Activated CD8-positive, alpha-beta T cell treated with anti-CD3 and anti-CD28 coated beads for 36 hours (primary cell): ENCODE measurements at regions of chr9 and their contacts with region 1.

Region 1: DNA sequence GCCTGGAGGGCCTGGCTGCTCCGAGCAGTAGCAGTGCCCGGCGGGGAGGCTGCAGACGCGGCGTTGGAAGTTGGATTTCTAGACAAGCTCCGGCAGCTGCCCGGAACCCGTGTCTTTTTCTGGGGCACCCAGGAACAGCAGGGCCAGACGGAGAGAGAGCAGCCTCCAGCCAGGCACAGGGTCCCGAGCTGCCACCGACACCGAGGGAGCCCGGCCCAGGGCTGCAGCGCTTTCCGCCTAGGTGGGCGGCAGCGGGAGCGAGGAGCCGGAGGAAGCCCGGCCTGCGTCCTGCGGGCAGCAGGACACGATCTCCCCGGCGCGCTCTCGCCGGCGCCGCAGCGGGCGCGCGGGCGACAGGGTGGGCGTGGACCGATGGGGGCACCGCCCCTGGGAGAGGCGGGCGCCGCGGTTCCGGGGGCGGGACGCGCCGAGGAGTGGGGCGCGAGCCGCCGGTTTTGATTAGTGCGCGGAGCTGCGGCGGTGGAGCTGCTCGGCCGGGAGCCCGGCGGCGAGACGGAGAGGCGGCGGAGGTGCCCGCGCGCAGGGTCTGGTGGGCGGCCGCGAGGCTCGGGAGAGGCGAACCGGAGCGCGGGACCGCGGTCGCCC is at the start of gene UGCG:
- DNase-seq: peak; percentile 88
- ATAC-seq: peak; percentile 88
- H3K4me3 Mint-ChIP-seq: peak within 1 kb of the TSS; percentile 87
- H3K27ac Mint-ChIP-seq: peak within 1 kb of the TSS; percentile 90
- H3K4me1 Mint-ChIP-seq: peaks cover 13% of the 10 kb centered on the region
- H3K27me3 Mint-ChIP-seq: no peaks in the 10 kb centered on the region
- CTCF ChIP-seq: no peak
- total RNA-seq, gene UGCG: 13.5 to 14.3 TPM

Region 2: DNA sequence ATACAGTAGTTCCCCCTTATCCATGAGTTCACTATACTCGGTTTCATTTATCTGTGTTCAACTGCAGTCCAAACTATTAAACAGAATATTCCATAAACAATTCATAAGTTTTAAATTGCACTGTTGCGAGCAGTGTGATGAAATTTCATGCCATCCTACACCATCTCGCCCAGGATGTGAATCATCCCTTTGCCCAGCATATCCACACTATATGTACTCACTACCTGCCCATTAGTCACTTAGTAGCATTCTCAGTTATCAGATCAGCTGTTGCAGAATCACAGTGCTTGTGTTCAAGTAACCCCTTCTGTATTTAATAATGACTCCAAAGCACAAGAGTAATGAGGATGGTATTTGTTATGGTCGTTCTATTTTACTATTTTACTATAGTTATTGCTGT is 153.2 kb before region 1 on chr9:
- CTCF ChIA-PET with region 1: no interaction called
- POLR2A ChIA-PET with region 1: no interaction called
- intact Hi-C with region 1: no loop called
- DNase-seq: peak; percentile 67
- ATAC-seq: peak; percentile 97
- H3K4me3 Mint-ChIP-seq: no peak overlapping the region
- H3K27ac Mint-ChIP-seq: peak overlapping the region; percentile 91
- H3K4me1 Mint-ChIP-seq: peaks cover 14% of the 10 kb centered on the region
- H3K27me3 Mint-ChIP-seq: no peaks in the 10 kb centered on the region
- CTCF ChIP-seq: no peak

Region 3: GRCh38 chr9:111851566-111851965 is 44.9 kb before region 1 on chr9:
- CTCF ChIA-PET with region 1: no interaction called
- POLR2A ChIA-PET with region 1: no interaction called
- intact Hi-C with region 1: no loop called
- DNase-seq: no peak
- ATAC-seq: no peak
- H3K4me3 Mint-ChIP-seq: no peak overlapping the region
- H3K27ac Mint-ChIP-seq: no peak overlapping the region
- H3K4me1 Mint-ChIP-seq: no peaks in the 10 kb centered on the region
- H3K27me3 Mint-ChIP-seq: no peaks in the 10 kb centered on the region
- CTCF ChIP-seq: no peak

Region 4: DNA sequence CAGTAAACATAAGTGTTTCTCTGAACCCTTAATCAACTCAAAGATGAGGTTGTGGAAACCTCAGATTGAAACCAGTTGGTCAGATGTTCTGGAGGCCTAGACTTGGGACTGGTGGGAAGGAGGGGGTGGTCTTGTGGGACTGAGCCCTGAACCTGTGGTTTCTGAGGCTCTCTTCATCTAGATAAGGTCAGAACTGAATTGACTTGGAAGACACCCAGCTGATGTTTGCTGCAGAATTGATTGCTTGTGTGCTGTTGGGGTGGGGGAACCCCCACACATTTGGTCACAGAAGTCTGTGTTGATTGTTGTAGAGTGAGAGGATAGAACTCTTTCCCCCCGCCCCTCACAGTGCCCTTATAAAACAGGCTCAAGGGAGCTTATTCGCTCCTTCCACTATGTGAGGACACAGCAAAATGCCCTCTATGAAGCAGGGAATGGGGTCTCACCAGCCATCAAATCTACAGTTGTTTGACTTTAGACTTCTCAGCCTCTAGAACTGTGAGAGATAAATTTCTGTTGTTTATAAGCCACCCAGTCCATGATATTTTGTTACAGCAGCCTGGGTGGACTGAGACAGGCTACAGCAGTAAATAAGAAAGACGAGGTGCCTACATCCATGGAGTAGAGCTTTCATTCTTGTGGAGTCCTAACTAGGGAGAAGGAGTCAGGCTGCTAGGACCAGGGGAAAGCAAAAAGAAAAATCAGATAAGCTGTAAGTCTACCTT is 25.5 kb before region 1 on chr9:
- CTCF ChIA-PET with region 1: interaction called, 3 read pairs
- POLR2A ChIA-PET with region 1: interaction called, 4 read pairs
- intact Hi-C with region 1: loop called (anchors 2 kb)
- DNase-seq: peak; percentile 69
- ATAC-seq: peak; percentile 91
- H3K4me3 Mint-ChIP-seq: no peak overlapping the region
- H3K27ac Mint-ChIP-seq: no peak overlapping the region
- H3K4me1 Mint-ChIP-seq: peaks cover 18% of the 10 kb centered on the region
- H3K27me3 Mint-ChIP-seq: peaks cover 5% of the 10 kb centered on the region
- CTCF ChIP-seq: no peak

Region 5: GRCh38 chr9:112086627-112087026 is 190.2 kb after region 1 on chr9:
- CTCF ChIA-PET with region 1: no interaction called
- POLR2A ChIA-PET with region 1: no interaction called
- intact Hi-C with region 1: no loop called
- DNase-seq: no peak
- ATAC-seq: no peak
- H3K4me3 Mint-ChIP-seq: no peak overlapping the region
- H3K27ac Mint-ChIP-seq: no peak overlapping the region
- H3K4me1 Mint-ChIP-seq: peaks cover 5% of the 10 kb centered on the region
- H3K27me3 Mint-ChIP-seq: no peaks in the 10 kb centered on the region
- CTCF ChIP-seq: peak; percentile 73